HCT116 (cell line): ENCODE measurements at regions of chr10 and their contacts with region 1.

Region 1: GRCh38 chr10:122565728-122566206 is 5.2 kb downstream of the DMBT1 start:
- DNase-seq: peak; percentile 85
- ATAC-seq: peak; percentile 79
- H3K4me3 ChIP-seq: peak overlapping the region; percentile 25 to 38
- H3K27ac ChIP-seq: no peak overlapping the region
- H3K4me1 ChIP-seq: peaks cover 0 to 4% of the 10 kb centered on the region in 2 experiments; a peak in 1 of 4 replicates
- H3K27me3 ChIP-seq: peaks cover 47% of the 10 kb centered on the region
- CTCF ChIP-seq: peak; percentile 88 to 98 (median 96)
- POLR2A ChIP-seq: no peak
- RAD21 ChIP-seq: peak; percentile 99

Region 2: DNA sequence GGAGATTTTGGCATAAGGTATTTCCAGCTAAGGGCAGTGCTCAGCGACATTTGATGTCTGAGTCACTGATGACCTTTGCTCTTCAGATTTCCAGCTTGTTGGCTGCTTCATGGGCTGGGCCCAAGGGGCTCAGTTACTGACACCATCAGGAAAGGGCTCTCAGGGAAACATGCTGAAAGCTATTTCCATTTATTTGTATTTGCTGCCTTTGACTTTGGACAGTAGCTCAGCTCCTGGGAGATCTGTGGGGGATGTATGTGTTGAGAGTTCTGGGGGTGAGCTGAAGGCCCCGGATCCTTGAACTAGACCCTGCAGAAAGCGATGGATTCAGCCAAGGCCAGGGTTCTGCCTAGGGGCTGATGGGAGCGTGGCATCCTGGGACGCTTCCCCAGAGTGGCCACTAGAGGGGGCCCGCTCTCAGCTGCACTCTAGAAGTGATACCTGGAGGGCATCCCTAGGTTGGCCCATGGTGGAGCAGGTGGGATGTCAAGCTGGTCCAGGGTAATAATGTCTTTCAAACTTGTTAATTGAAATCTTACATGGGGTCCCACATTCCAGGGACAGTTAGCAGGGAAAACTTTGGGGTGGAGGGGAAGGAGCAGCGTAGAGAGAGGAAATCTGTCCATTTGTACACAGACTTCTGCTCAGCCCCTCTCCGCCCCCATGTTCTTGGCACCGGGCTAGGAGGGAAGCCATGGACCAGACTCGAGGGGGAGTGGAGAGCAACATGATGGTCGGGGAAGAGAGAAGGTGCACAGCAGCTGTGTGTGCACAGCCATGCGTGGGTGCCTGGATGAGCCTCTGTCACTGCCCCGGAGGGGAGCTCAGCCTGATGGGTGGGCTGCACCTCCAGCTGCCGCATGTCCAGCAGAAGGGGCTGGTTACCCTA is 297.7 kb before region 1 on chr10:
- CTCF ChIA-PET with region 1: interaction called, 13 read pairs
- POLR2A ChIA-PET with region 1: no interaction called
- RAD21 ChIA-PET with region 1: interaction called in 1 of 2 experiments, 4 read pairs
- intact Hi-C with region 1: no loop called
- DNase-seq: peak; percentile 36
- ATAC-seq: peak; percentile 99
- H3K4me3 ChIP-seq: no peak overlapping the region
- H3K27ac ChIP-seq: no peak overlapping the region
- H3K4me1 ChIP-seq: peaks cover 0 to 16% of the 10 kb centered on the region in 2 experiments; a peak in 2 of 4 replicates
- H3K27me3 ChIP-seq: no peaks in the 10 kb centered on the region
- CTCF ChIP-seq: peak; percentile 85 to 100 (median 100)
- POLR2A ChIP-seq: no peak
- RAD21 ChIP-seq: peak; percentile 80

Region 3: GRCh38 chr10:122307669-122308486 is 257.9 kb before region 1 on chr10:
- CTCF ChIA-PET with region 1: interaction called, 12 read pairs
- POLR2A ChIA-PET with region 1: no interaction called
- RAD21 ChIA-PET with region 1: interaction called in 1 of 2 experiments, 3 read pairs
- intact Hi-C with region 1: no loop called
- DNase-seq: peak; percentile 97
- ATAC-seq: peak; percentile 75
- H3K4me3 ChIP-seq: peak overlapping the region; percentile 29 to 45
- H3K27ac ChIP-seq: peak overlapping the region; percentile 95
- H3K4me1 ChIP-seq: peaks cover 28 to 46% of the 10 kb centered on the region in 2 experiments
- H3K27me3 ChIP-seq: no peaks in the 10 kb centered on the region
- CTCF ChIP-seq: no peak
- POLR2A ChIP-seq: no peak
- RAD21 ChIP-seq: peak; percentile 50

Region 4: GRCh38 chr10:122446668-122447423 is 118.9 kb before region 1 on chr10:
- CTCF ChIA-PET with region 1: interaction called, 17 read pairs
- POLR2A ChIA-PET with region 1: no interaction called
- RAD21 ChIA-PET with region 1: interaction called in 1 of 2 experiments, 3 read pairs
- intact Hi-C with region 1: no loop called
- DNase-seq: peak; percentile 36
- ATAC-seq: peak; percentile 99
- H3K4me3 ChIP-seq: no peak overlapping the region
- H3K27ac ChIP-seq: no peak overlapping the region
- H3K4me1 ChIP-seq: peaks cover 7 to 15% of the 10 kb centered on the region in 2 experiments; a peak in 3 of 4 replicates
- H3K27me3 ChIP-seq: no peaks in the 10 kb centered on the region
- CTCF ChIP-seq: no peak
- POLR2A ChIP-seq: no peak
- RAD21 ChIP-seq: no peak

Region 5: GRCh38 chr10:122648599-122649428 is 83.0 kb after region 1 on chr10:
- CTCF ChIA-PET with region 1: interaction called, 11 read pairs
- POLR2A ChIA-PET with region 1: no interaction called
- RAD21 ChIA-PET with region 1: no interaction called
- intact Hi-C with region 1: no loop called
- DNase-seq: peak; percentile 49
- ATAC-seq: peak; percentile 89
- H3K4me3 ChIP-seq: no peak overlapping the region
- H3K27ac ChIP-seq: no peak overlapping the region
- H3K4me1 ChIP-seq: no peaks in the 10 kb centered on the region
- H3K27me3 ChIP-seq: peaks cover 65% of the 10 kb centered on the region
- CTCF ChIP-seq: peak; percentile 84 to 96 (median 95); a peak in 5 of 6 replicates
- POLR2A ChIP-seq: no peak
- RAD21 ChIP-seq: peak; percentile 85

Region 6: DNA sequence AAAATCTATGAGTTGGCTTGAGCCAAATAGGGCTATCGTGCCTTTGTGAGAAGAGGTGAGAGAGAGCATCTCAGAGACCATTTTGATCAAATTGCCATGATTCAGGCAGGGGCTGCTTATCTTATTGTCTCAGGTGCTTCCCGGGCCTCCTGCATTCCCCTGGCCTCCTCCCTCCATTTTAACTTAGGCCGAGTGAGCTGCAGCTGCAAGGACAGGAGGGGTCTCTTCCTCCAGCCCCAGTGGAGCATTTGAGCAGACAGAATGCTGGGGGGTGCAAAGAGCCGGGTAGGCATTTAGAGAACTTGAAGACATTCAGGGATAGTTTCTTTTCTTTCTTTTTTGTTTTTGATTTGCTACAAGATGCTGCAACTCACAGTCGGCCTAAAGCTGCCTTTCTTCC is 647.4 kb after region 1 on chr10:
- CTCF ChIA-PET with region 1: no interaction called
- POLR2A ChIA-PET with region 1: no interaction called
- RAD21 ChIA-PET with region 1: no interaction called
- intact Hi-C with region 1: no loop called
- DNase-seq: no peak
- ATAC-seq: no peak
- H3K4me3 ChIP-seq: no peak overlapping the region
- H3K27ac ChIP-seq: no peak overlapping the region
- H3K4me1 ChIP-seq: no peaks in the 10 kb centered on the region
- H3K27me3 ChIP-seq: no peaks in the 10 kb centered on the region
- CTCF ChIP-seq: no peak
- POLR2A ChIP-seq: no peak
- RAD21 ChIP-seq: no peak